ENCODE measurements at regions of chr17 and their contacts with region 1.

Region 1: DNA sequence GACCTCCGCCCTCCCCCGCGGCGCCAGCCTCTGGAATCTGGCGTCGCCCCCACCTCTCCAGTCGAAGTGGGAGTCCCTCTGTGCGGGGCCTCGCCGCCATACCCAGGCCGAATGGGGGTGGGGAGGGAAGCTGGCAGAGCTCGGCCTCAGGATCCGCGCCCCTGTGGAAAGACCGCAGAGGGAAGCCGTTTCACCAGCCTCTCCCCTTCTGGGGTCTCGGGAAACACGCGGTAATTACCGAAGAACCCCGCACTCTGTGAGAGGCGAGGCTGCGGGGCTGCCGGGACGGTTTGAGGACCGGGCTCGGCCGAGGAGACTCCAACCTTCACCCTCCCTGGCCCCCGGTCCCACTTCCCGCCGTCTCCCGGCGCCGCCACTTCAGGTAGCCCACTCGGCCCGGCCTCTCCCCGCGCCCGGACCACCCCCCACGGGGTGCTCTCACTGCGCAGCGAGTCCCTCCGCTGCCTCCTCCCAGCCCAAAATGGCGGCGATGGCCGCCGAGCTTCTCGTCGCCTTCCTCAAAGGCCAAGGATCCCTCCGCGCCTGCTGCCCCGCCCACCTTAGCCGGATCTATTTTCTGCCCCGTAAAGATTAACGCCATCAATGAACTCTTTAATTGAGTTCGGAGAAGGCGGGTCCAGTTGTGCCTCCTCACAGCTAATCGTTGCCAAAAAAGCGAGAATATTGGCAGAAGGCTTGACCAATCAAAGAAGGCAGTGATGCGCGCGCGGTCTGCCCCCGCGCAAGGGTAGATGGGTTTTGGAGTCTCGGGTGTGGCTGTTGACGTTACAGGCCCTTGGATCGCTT is 453 bp upstream of the HEXIM2 start:
- DNase-seq: peak; percentile 91 to 100 (median 99)
- ATAC-seq: peak; percentile 93 to 95
- H3K4me3 Mint-ChIP-seq: peak overlapping the region; percentile 88 to 98 (median 95)
- H3K27ac Mint-ChIP-seq: peak overlapping the region; percentile 96 to 99 (median 98)
- H3K4me1 Mint-ChIP-seq: peaks cover 14 to 47% (median 38%) of the 10 kb centered on the region in 4 donors
- H3K27me3 Mint-ChIP-seq: no peaks in the 10 kb centered on the region

Region 2: DNA sequence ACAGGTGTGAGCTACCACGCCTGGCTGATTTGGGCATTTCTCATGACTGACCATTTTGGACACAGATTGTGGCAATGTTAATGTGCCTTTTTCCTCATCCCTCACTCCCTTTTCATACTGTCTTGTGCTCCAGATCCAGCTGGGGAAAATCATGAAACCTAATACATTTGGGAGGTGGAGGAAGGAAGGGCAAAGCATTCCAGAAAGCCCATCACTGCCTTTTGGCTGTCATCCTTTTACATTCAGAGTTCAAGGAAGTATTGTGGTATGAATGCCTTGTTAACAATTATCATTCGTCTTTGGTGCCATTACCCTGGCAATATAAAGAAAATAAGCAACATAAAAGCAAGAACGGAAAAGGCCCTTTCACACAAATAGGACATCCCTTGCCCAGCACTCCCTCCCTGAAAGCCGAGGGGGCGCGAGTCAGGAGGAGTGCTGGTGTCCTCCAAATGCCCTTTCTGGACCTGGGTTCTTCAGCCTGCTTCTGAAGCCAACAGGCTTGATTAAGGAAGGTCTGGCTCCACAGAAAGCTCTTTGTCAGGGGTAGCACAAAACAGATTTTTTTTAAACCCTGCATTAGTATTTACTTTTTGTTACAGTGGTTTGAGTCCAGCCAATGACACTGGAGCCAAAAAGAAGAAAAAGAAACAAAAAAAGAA is 80.0 kb before region 1 on chr17:
- POLR2A ChIA-PET with region 1: no interaction called
- DNase-seq: no peak
- ATAC-seq: no peak
- H3K4me3 Mint-ChIP-seq: no peak overlapping the region
- H3K27ac Mint-ChIP-seq: peak overlapping the region in 1 of 10 donors; percentile 24
- H3K4me1 Mint-ChIP-seq: peaks cover 8 to 21% (median 19%) of the 10 kb centered on the region in 4 donors
- H3K27me3 Mint-ChIP-seq: no peaks in the 10 kb centered on the region

Region 3: GRCh38 chr17:45135192-45135977 is 25.8 kb before region 1 on chr17 and contains the start of gene ACBD4:
- POLR2A ChIA-PET with region 1: interaction called, 38 read pairs
- DNase-seq: peak; percentile 92 to 100 (median 98)
- ATAC-seq: peak; percentile 86 to 88
- H3K4me3 Mint-ChIP-seq: peak within 1 kb of the TSS; percentile 86 to 94 (median 90)
- H3K27ac Mint-ChIP-seq: peak within 1 kb of the TSS; percentile 65 to 95 (median 88)
- H3K4me1 Mint-ChIP-seq: peaks cover 8 to 26% (median 18%) of the 10 kb centered on the region in 4 donors
- H3K27me3 Mint-ChIP-seq: peaks cover 0 to 3% (median 3%) of the 10 kb centered on the region in 5 donors
- polyA plus RNA-seq, gene ACBD4: 10.5 to 17.4 (median 11.7) TPM

Region 4: GRCh38 chr17:45197555-45198334 is 36.5 kb after region 1 on chr17:
- POLR2A ChIA-PET with region 1: interaction called, 15 read pairs
- DNase-seq: peak; percentile 72 to 92 (median 84)
- ATAC-seq: peak; percentile 99 to 100
- H3K4me3 Mint-ChIP-seq: no peak overlapping the region
- H3K27ac Mint-ChIP-seq: no peak overlapping the region
- H3K4me1 Mint-ChIP-seq: peaks cover 2 to 9% (median 5%) of the 10 kb centered on the region in 4 donors
- H3K27me3 Mint-ChIP-seq: no peaks in the 10 kb centered on the region

Region 5: GRCh38 chr17:45228763-45229539 is 67.7 kb after region 1 on chr17:
- POLR2A ChIA-PET with region 1: interaction called, 37 read pairs
- DNase-seq: peak; percentile 63 to 86 (median 77)
- ATAC-seq: peak; percentile 48 to 55
- H3K4me3 Mint-ChIP-seq: peak overlapping the region; percentile 84 to 100 (median 98)
- H3K27ac Mint-ChIP-seq: peak overlapping the region; percentile 98 to 100 (median 100)
- H3K4me1 Mint-ChIP-seq: peaks cover 59 to 98% (median 86%) of the 10 kb centered on the region in 4 donors
- H3K27me3 Mint-ChIP-seq: no peaks in the 10 kb centered on the region

Region 6: DNA sequence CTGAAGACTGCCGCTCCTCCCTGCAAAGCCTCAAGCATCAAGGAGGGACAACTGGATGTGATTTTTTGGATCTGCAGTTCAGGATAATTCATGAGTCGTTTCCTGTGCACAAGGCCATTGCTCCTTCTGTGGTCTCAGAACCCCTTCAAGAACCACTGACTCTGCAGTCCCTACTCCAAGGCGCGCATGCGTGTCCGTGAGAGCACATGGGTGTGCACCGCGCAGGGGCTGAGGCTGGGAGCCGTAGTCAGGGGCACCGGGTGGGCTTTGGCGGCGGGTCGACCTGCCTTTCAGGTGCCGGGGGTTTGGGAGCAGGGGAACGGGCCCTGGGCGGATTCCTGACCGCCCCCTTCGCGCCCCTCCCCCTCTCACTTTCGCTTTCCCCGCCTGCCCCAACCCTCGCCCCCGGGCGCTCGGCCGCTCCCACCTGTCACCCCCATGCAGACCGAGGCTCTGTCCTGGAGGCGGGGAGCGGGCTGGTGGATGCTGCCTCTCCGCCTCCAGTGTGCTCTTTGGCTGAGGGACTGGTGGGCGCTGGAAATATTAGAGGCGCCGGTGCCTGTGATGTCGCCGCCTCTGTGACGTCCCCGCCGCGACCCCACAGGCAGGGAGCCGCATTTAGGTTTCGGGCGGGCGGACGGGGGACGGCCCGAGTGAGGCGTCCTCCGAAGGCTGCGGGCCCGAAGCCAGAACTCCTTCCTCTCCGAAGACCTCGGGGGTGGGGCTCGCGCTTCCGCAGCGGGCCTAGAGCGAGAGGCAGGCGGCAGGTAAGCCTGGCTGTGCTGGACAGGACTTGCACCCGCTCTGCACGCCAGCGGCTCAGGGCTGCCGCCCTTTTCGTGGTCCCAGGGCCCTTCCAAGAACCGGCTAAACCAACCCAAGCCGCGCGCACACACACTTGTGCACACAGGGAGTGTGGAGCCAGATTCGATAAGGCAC is 100.6 kb after region 1 on chr17 and contains the start of gene SPATA32:
- POLR2A ChIA-PET with region 1: no interaction called
- DNase-seq: peak; percentile 59 to 87 (median 70)
- ATAC-seq: peak; percentile 86
- H3K4me3 Mint-ChIP-seq: peak within 1 kb of the TSS; percentile 78 to 91 (median 84)
- H3K27ac Mint-ChIP-seq: peak within 1 kb of the TSS; percentile 49 to 93 (median 88)
- H3K4me1 Mint-ChIP-seq: peaks cover 25 to 45% (median 38%) of the 10 kb centered on the region in 4 donors
- H3K27me3 Mint-ChIP-seq: no peaks in the 10 kb centered on the region
- polyA plus RNA-seq, gene SPATA32: 0.30 to 0.81 (median 0.44) TPM

Region 7: GRCh38 chr17:45311760-45312476 is 150.7 kb after region 1 on chr17:
- POLR2A ChIA-PET with region 1: interaction called, 25 read pairs
- DNase-seq: peak; percentile 29 to 70 (median 54)
- ATAC-seq: peak; percentile 7 to 21
- H3K4me3 Mint-ChIP-seq: peak overlapping the region; percentile 76 to 95 (median 87)
- H3K27ac Mint-ChIP-seq: peak overlapping the region; percentile 91 to 100 (median 98)
- H3K4me1 Mint-ChIP-seq: peaks cover 56 to 88% (median 82%) of the 10 kb centered on the region in 4 donors
- H3K27me3 Mint-ChIP-seq: no peaks in the 10 kb centered on the region